ENCODE measurements at regions of chr2 and their contacts with region 1.

Region 1: GRCh38 chr2:186460465-186460864 is 25.6 kb upstream of the ZC3H15 start:
- DNase-seq: peak; percentile 68
- ATAC-seq: peak; percentile 89
- H3K4me3 ChIP-seq: no peak overlapping the region
- H3K27ac ChIP-seq: no peak overlapping the region
- H3K4me1 ChIP-seq: peaks cover 7% of the 10 kb centered on the region
- H3K27me3 ChIP-seq: no peaks in the 10 kb centered on the region
- CTCF ChIP-seq: peak; percentile 74
- EP300 ChIP-seq: no peak
- POLR2A ChIP-seq: no peak
- RAD21 ChIP-seq: peak; percentile 79

Region 2: DNA sequence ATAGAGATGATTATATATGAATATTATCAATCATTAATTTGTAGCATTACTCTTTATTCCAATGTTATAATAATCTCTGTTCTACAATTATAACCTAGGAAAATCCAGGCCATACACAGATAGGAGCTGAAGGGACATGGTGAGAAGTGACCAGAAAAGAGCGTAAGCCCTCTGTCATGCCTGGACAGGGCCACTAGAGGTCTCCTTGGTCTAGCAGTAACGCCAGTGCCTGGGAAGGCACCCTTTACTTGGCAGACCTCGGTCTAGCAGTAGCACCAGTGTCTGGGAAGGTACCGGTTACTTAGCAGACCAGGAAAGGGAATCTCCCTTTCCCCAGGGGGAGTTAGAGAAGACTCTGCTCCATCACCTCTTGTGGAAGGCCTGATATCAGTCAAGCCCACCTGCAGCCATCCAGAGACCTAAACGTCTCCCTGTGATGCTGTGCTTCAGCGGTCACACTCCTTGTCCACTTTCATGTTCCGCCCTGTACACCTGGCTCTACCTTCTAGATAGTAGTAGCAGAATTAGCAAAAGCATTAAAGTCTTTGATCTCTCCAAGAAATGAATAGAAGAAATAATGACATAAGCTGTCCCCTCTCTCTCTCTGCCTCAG is 1169.3 kb before region 1 on chr2:
- CTCF ChIA-PET with region 1: interaction called, 4 read pairs
- POLR2A ChIA-PET with region 1: no interaction called
- in situ Hi-C with region 1: loop called (anchors 25 kb)
- intact Hi-C with region 1: loop called (anchors 1 kb)
- DNase-seq: peak; percentile 64
- ATAC-seq: peak; percentile 100
- H3K4me3 ChIP-seq: no peak overlapping the region
- H3K27ac ChIP-seq: no peak overlapping the region
- H3K4me1 ChIP-seq: peaks cover 10% of the 10 kb centered on the region
- H3K27me3 ChIP-seq: no peaks in the 10 kb centered on the region
- CTCF ChIP-seq: peak; percentile 74
- EP300 ChIP-seq: no peak
- POLR2A ChIP-seq: no peak
- RAD21 ChIP-seq: peak; percentile 74

Region 3: GRCh38 chr2:185608799-185609198 is 851.7 kb before region 1 on chr2:
- CTCF ChIA-PET with region 1: no interaction called
- POLR2A ChIA-PET with region 1: no interaction called
- in situ Hi-C with region 1: loop called (anchors 25 kb)
- intact Hi-C with region 1: loop called (anchors 1 kb)
- DNase-seq: no peak
- ATAC-seq: peak; percentile 71
- H3K4me3 ChIP-seq: no peak overlapping the region
- H3K27ac ChIP-seq: no peak overlapping the region
- H3K4me1 ChIP-seq: no peaks in the 10 kb centered on the region
- H3K27me3 ChIP-seq: no peaks in the 10 kb centered on the region
- CTCF ChIP-seq: peak; percentile 60
- EP300 ChIP-seq: no peak
- POLR2A ChIP-seq: no peak
- RAD21 ChIP-seq: no peak

Region 4: GRCh38 chr2:185738679-185739472 is 721.6 kb before region 1 on chr2 and contains the start of gene FSIP2:
- CTCF ChIA-PET with region 1: no interaction called
- POLR2A ChIA-PET with region 1: no interaction called
- in situ Hi-C with region 1: no loop called
- intact Hi-C with region 1: loop called (anchors 1 kb)
- DNase-seq: peak; percentile 65
- ATAC-seq: peak; percentile 98
- H3K4me3 ChIP-seq: peak within 1 kb of the TSS; percentile 38 to 64 (median 49); a peak in 5 of 6 replicates
- H3K27ac ChIP-seq: no peak within 1 kb of the TSS
- H3K4me1 ChIP-seq: no peaks in the 10 kb centered on the region
- H3K27me3 ChIP-seq: 0 out of 5 replicates have a peak, but pooled peaks cover 0 to 4% of the 10 kb centered on the region in 2 experiments
- CTCF ChIP-seq: peak; percentile 97
- EP300 ChIP-seq: no peak
- POLR2A ChIP-seq: no peak
- RAD21 ChIP-seq: peak; percentile 97
- total RNA-seq, gene FSIP2: 0.04 and 0.07 TPM in 2 replicates

Region 5: GRCh38 chr2:185979546-185980071 is 480.9 kb before region 1 on chr2:
- CTCF ChIA-PET with region 1: no interaction called
- POLR2A ChIA-PET with region 1: no interaction called
- in situ Hi-C with region 1: loop called (anchors 25 kb)
- intact Hi-C with region 1: loop called (anchors 10 kb)
- DNase-seq: peak; percentile 5
- ATAC-seq: peak; percentile 68
- H3K4me3 ChIP-seq: no peak overlapping the region
- H3K27ac ChIP-seq: no peak overlapping the region
- H3K4me1 ChIP-seq: no peaks in the 10 kb centered on the region
- H3K27me3 ChIP-seq: no peaks in the 10 kb centered on the region
- CTCF ChIP-seq: peak; percentile 32; the same call in 1 of the 2 replicates
- EP300 ChIP-seq: no peak
- POLR2A ChIP-seq: no peak
- RAD21 ChIP-seq: no peak

Measured in HepG2 (cell line).